ENCODE measurements at regions of chr14 and their contacts with region 1.

Region 1: GRCh38 chr14:64158608-64159007 is 135.6 kb downstream of the ESR2 start:
- DNase-seq: no peak
- ATAC-seq: no peak
- H3K4me3 Mint-ChIP-seq: no peak overlapping the region
- H3K27ac Mint-ChIP-seq: no peak overlapping the region
- H3K4me1 Mint-ChIP-seq: no peaks in the 10 kb centered on the region
- H3K27me3 Mint-ChIP-seq: no peaks in the 10 kb centered on the region
- CTCF ChIP-seq: no peak

Region 2: DNA sequence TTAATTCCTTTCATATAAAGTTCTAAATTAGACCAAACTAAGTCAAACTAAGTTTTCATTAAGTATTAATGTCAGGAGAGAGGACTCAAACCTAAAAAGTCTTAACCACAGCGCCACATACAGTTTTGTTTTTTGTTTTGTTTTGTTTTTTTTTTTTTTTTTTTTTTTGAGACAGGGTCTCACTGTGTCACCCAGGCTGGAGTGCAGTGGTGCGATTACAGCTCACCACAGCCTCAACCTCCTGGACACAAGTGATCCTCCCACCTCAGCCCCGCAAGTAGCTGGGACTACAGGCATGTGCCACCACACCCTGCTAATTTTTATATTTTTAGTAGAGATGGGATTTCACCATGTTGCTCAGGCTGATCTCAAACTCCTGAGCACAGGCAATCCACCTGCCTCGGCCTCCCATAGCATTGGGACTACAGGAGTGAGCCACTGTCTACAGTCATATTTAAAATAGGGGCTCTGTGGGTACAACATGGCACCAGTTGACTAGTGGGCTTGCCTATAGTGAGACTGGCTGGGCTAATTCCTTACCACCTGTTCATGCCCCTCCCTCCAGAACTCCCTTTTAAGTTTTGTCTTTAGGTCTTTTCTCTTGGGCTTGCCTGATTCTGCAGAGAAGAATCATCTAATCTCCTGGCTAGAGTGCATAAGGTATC is 725.6 kb before region 1 on chr14:
- CTCF ChIA-PET with region 1: no interaction called
- POLR2A ChIA-PET with region 1: interaction called, 10 read pairs
- DNase-seq: no peak
- ATAC-seq: no peak; the same call in 1 of the 2 replicates
- H3K4me3 Mint-ChIP-seq: no peak overlapping the region
- H3K27ac Mint-ChIP-seq: no peak overlapping the region; the same call in 1 of the 2 replicates
- H3K4me1 Mint-ChIP-seq: peaks cover 51% of the 10 kb centered on the region
- H3K27me3 Mint-ChIP-seq: no peaks in the 10 kb centered on the region
- CTCF ChIP-seq: no peak

Measured in WTC11 (cell line).